ENCODE measurements at regions of chr12 and their contacts with region 1.

Region 1: DNA sequence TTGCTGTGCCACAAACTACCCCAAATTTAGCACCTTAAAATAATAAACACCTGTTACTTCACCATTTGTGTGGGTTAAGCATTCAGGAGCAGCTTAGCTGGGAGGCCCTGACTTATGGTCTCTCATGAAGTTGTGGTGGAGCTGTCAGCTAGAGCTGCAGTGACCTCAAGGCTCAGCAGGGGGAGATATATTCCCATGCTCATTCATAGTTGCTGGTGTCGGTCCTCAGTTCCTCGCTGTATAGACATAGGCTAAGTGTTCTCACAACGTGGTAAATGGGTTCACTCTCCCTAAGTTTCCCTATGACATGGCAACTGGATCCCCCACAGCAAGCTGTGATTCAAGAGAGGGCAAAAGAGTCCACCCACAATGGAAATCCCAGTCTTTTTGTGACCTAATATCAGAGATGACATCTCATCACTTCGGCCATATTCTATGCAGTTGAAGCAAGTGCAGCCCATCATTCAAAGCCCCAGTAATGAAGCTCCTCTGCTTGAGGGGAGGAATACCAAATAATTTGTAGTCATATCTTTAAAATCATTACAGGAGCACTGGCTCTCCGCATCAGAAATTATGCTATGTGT is 41.1 kb downstream of the PRB3 start:
- DNase-seq: peak; percentile 85

Region 2: GRCh38 chr12:11446372-11446771 is 218.0 kb after region 1 on chr12:
- in situ Hi-C with region 1: no loop called
- DNase-seq: no peak

Region 3: GRCh38 chr12:11486623-11487444 is 258.4 kb after region 1 on chr12:
- in situ Hi-C with region 1: loop called (anchors 25 kb)
- DNase-seq: peak; percentile 92